ENCODE measurements at regions of chr10 and their contacts with region 1.

Region 1: GRCh38 chr10:76984559-76985443 is 652.8 kb downstream of the KCNMA1 start:
- H3K4me3 Mint-ChIP-seq: no peak overlapping the region
- H3K27ac Mint-ChIP-seq: no peak overlapping the region
- H3K4me1 Mint-ChIP-seq: no peaks in the 10 kb centered on the region
- H3K27me3 Mint-ChIP-seq: peaks cover 10% of the 10 kb centered on the region

Region 2: DNA sequence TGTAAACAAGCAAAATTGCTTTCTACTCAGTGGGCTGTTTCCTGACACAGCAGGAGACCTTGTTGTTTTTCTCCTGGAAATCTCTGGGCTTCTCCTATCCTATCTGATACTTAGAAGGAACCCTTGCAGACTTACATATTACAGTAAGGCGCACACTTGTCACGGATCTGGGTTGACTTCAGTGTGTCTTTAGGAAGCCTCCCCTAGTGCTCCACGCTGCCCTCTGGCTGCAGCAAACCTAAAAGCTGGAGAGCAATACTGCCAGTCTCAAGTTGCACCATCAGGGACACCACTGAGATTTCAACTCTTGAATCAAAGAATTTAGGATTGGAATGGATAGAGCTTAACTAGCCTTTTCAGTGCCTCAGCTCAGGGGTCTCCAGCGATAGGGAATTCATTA is 1058.0 kb before region 1 on chr10:
- intact Hi-C with region 1: loop called (anchors 5 kb)
- H3K4me3 Mint-ChIP-seq: no peak overlapping the region
- H3K27ac Mint-ChIP-seq: no peak overlapping the region
- H3K4me1 Mint-ChIP-seq: peaks cover 15% of the 10 kb centered on the region
- H3K27me3 Mint-ChIP-seq: no peaks in the 10 kb centered on the region

Region 3: GRCh38 chr10:76547352-76547972 is 437.3 kb before region 1 on chr10:
- intact Hi-C with region 1: loop called (anchors 5 kb)
- H3K4me3 Mint-ChIP-seq: no peak overlapping the region
- H3K27ac Mint-ChIP-seq: no peak overlapping the region
- H3K4me1 Mint-ChIP-seq: peaks cover 1% of the 10 kb centered on the region
- H3K27me3 Mint-ChIP-seq: no peaks in the 10 kb centered on the region

Region 4: DNA sequence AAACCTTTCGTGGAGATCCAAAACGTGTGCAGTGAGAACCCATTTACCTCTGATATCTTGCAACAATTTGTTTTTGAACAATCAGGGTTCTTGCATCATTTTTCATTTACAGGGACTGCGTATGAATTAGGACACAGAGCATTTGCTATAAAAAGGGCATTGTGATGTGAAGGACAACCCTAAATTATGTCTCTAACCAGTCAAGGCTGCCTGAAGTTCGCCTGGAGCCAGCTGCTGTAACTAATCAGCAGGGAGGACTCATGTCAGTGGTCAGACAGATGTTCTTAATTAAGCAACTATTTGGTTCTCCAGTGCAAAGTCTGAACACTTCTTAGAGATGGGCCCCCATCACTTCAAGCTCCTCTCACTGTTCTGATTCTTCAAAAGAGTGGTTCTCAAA is 21.9 kb before region 1 on chr10:
- intact Hi-C with region 1: no loop called
- H3K4me3 Mint-ChIP-seq: no peak overlapping the region
- H3K27ac Mint-ChIP-seq: no peak overlapping the region
- H3K4me1 Mint-ChIP-seq: peaks cover 21% of the 10 kb centered on the region
- H3K27me3 Mint-ChIP-seq: peaks cover 32% of the 10 kb centered on the region

Measured in dendritic cell treated with granulocyte-macrophage colony-stimulating factor and Interleukin-4, amounts not matched to agents 40 ng/mL and 50 ng/mL, for 4 days (primary cell).